GM13976 (cell line): ENCODE measurements at regions of chr9 and their contacts with region 1.

Region 1: GRCh38 chr9:120755827-120756434 is 37.3 kb downstream of the FBXW2 start:
- DNase-seq: peak; percentile 75
- CTCF ChIP-seq: peak; percentile 60

Region 2: DNA sequence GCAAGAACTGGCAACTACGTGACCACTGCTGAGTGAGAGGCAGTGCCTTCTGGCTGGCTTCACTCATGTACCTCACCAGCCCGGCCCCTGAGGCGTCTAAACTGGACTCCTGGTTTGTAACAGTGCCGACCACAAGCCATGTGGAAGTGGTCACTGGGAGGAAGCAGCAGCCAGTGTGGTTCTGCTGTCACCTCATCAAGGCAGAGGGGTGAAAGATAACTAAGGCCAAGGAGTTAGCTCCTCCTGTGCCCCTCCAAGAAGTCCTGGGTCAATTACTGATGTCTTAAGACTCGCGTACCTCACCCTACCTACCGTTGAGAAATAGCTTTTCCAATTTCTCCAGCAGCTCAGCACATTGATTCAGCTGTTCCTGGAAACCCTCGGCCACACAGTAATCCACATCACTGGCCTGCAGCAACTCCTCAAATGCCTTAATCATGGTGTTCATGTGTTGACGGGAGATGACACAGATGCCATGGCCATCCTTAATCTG is 318.9 kb before region 1 on chr9:
- in situ Hi-C with region 1: no loop called
- DNase-seq: no peak
- CTCF ChIP-seq: no peak

Region 3: DNA sequence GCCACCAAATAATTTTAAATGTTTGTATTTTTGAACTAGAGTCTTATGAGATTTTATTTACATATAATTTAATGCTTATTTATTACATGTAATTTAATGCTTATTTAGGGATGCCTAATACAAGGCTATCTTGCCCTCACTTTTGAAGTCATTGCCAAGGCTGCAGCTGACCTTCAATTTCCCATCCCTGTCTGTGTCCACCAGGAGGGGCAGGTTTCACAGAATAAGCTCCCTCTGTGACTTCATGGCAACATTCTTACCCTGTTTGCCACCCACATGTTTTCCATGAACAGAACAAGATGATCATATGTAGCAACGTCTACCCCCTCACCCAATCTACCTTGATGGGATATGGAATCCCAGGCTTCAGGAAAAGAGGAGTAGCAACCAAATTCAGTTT is 267.1 kb after region 1 on chr9:
- in situ Hi-C with region 1: no loop called
- DNase-seq: no peak
- CTCF ChIP-seq: no peak

Region 4: DNA sequence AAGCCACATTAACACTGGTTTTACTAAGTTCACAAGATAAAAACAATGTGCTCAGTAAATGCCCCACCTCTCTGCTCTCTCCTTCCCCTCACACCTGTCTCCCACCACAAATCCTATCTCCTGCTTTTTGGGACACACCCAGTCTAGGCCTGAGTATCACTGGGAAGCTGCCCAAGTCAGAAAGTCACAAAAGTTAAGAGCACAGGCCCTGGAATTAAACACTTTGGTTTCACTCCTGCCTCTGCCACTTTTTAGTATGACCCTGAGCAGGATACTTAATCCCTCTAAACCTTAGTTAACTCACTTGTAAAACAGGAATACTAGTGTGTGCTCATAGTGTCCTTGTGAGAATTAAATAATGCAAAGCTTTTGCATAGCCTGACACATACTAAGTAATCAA is 282.9 kb after region 1 on chr9:
- in situ Hi-C with region 1: no loop called
- DNase-seq: no peak
- CTCF ChIP-seq: no peak

Region 5: DNA sequence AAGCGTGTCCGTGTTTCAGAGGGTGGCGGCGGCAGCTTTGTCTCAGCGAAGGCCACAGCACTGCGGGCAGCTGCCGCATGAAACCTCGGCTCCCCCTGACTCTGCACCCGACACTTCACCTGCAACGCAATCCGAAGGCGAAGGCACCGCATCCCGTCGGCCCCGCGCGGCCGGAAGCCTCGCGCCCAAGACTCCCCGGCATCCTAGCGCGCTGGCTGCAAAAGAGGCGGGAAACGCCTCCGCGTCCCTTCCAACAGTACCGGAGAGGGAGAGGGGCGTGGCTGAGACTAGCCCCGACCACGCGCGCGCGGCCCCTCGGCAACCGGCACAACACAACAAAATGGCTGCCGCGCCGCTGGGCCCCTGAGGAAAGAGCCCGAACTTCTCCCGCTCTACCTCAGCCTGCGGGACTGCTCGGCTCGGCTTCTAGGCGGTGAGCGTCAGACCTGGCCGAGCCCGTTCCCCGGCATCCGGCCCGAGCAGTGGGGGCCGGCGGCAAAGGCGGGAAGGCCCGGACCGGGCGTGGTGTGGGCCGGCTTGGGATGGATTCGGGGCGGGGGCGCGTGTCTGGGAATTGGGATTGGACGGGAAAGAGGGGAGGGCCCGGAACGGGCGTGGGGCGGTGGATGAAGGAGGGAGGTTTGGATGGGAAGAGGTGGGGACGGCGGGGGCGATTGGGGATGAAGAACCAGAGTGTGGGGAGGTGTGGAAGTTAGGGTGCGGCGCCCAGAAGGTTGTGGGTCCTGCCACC is 318.9 kb after region 1 on chr9 and contains the start of gene CNTRL:
- in situ Hi-C with region 1: loop called (anchors 25 kb)
- DNase-seq: peak; percentile 91
- CTCF ChIP-seq: no peak